Activated CD8-positive, alpha-beta memory T cell treated with anti-CD3 and anti-CD28 coated beads, Interleukin-2, amount 10 ng/mL, durations not matched to agents 7 days and 5 days (primary cell): ENCODE measurements at regions of chr6 and their contacts with region 1.

Region 1: GRCh38 chr6:34986845-34987246 is 97.8 kb downstream of the ANKS1A start:
- DNase-seq: peak; percentile 70
- ATAC-seq: peak; percentile 73
- H3K4me3 Mint-ChIP-seq: no peak overlapping the region
- H3K27ac Mint-ChIP-seq: no peak overlapping the region
- H3K4me1 Mint-ChIP-seq: peaks cover 3% of the 10 kb centered on the region
- H3K27me3 Mint-ChIP-seq: no peaks in the 10 kb centered on the region

Region 2: GRCh38 chr6:34970957-34971356 is 15.9 kb before region 1 on chr6:
- CTCF ChIA-PET with region 1: interaction called, 15 read pairs
- DNase-seq: no peak
- ATAC-seq: no peak
- H3K4me3 Mint-ChIP-seq: no peak overlapping the region
- H3K27ac Mint-ChIP-seq: no peak overlapping the region
- H3K4me1 Mint-ChIP-seq: peaks cover 14% of the 10 kb centered on the region
- H3K27me3 Mint-ChIP-seq: no peaks in the 10 kb centered on the region

Region 3: DNA sequence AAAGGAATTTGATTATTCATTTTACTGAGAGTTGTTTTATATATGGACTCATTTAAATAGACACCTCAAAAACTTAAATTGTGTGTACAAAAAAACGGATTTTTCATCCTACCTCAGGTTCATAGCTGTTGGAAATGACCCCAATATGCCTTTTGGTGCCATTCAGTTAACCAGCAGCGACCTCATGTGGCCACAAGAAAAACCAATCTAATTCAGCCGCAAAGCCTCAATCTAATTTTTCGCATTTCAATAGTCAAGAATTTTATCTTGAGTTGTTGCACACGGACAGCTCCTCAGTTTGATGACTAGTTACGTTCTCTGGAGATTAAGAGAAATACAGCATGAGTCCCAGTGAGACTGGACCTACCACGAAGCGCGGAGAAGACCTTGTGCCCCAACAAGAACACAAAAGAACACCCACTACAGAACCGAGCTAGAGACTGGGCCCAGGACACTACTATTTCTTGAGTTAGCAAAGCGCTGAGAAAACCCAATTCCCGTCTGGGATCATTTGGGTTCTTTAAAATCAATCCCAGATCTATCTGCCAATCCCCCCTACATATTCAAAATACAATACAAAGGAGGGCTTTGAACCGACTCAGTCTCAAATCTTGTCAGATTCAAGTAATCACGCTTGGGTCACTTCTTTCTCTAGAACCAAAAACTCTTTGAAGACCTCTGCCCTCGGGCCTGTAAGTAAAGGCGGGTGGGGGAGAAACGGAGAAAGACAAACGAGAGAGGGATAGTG is 153.2 kb after region 1 on chr6:
- CTCF ChIA-PET with region 1: interaction called, 36 read pairs
- DNase-seq: peak; percentile 67
- ATAC-seq: peak; percentile 32
- H3K4me3 Mint-ChIP-seq: peak overlapping the region; percentile 14
- H3K27ac Mint-ChIP-seq: no peak overlapping the region
- H3K4me1 Mint-ChIP-seq: peaks cover 20% of the 10 kb centered on the region
- H3K27me3 Mint-ChIP-seq: peaks cover 37% of the 10 kb centered on the region

Region 4: GRCh38 chr6:35146453-35146852 is 159.6 kb after region 1 on chr6:
- CTCF ChIA-PET with region 1: interaction called, 12 read pairs
- DNase-seq: peak; percentile 70
- ATAC-seq: no peak
- H3K4me3 Mint-ChIP-seq: no peak overlapping the region
- H3K27ac Mint-ChIP-seq: no peak overlapping the region
- H3K4me1 Mint-ChIP-seq: peaks cover 42% of the 10 kb centered on the region
- H3K27me3 Mint-ChIP-seq: peaks cover 18% of the 10 kb centered on the region

Region 5: DNA sequence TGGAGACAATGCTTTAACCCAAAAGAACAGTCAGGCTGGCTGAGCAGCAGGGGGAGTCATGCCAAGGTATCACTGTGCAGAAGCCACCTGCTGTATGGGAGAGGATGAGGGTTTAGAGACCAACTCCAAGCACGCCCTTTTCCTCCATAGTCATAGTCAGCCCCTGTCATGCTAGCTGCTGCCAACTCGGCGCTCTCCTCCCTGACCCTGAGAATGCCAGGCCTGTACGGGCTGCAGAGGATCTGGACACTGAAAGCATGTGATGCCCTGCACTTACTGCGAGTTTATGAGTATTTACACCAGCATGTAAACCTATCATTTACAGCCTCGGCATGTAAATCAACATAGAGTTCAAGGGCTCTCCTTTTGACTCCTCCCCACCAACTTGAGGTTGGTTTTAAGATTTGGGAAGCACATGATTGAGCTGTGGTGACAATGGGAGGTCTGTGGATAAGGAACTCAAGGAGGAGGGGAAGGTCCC is 215.3 kb after region 1 on chr6:
- CTCF ChIA-PET with region 1: interaction called, 50 read pairs
- DNase-seq: no peak
- ATAC-seq: no peak
- H3K4me3 Mint-ChIP-seq: no peak overlapping the region
- H3K27ac Mint-ChIP-seq: no peak overlapping the region
- H3K4me1 Mint-ChIP-seq: no peaks in the 10 kb centered on the region
- H3K27me3 Mint-ChIP-seq: peaks cover 56% of the 10 kb centered on the region